ENCODE measurements at regions of chr12 and their contacts with region 1.

Region 1: DNA sequence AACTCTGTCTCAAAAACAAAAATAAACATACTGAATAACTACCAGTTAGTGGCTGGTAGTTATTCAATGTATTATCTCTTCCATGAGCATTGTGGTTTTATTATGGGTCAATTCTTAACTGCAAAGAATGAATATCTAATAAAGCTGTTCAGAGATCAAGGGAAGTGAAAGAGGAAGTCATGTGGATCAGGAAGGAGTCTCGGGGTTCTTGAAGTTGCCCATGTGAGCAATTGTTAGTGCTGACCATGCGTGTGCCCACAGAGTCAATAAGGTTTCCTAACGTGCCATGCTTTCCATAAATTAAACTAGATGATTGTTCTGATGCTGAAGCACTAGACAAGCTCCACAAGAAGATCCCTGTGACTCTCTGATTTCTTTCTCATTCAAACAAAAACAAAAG is 136.5 kb upstream of the CPSF6 start:
- DNase-seq: no peak
- ATAC-seq: no peak
- H3K4me3 ChIP-seq: no peak overlapping the region
- H3K27ac ChIP-seq: peak overlapping the region; percentile 15; the same call in 1 of the 2 replicates
- H3K4me1 ChIP-seq: no peaks in the 10 kb centered on the region; the same call in none of the 2 replicates
- H3K27me3 ChIP-seq: no peaks in the 10 kb centered on the region
- CTCF ChIP-seq: no peak

Region 2: GRCh38 chr12:69024413-69024812 is 78.4 kb before region 1 on chr12:
- CTCF ChIA-PET with region 1: no interaction called
- POLR2A ChIA-PET with region 1: no interaction called
- in situ Hi-C with region 1: no loop called
- intact Hi-C with region 1: no loop called
- DNase-seq: no peak
- ATAC-seq: no peak
- H3K4me3 ChIP-seq: no peak overlapping the region
- H3K27ac ChIP-seq: no peak overlapping the region
- H3K4me1 ChIP-seq: no peaks in the 10 kb centered on the region
- H3K27me3 ChIP-seq: no peaks in the 10 kb centered on the region
- CTCF ChIP-seq: no peak

Region 3: GRCh38 chr12:69168828-69169227 is 66.0 kb after region 1 on chr12:
- CTCF ChIA-PET with region 1: no interaction called
- POLR2A ChIA-PET with region 1: interaction called, 13 read pairs
- in situ Hi-C with region 1: no loop called
- intact Hi-C with region 1: no loop called
- DNase-seq: no peak
- ATAC-seq: no peak
- H3K4me3 ChIP-seq: no peak overlapping the region
- H3K27ac ChIP-seq: no peak overlapping the region
- H3K4me1 ChIP-seq: no peaks in the 10 kb centered on the region
- H3K27me3 ChIP-seq: no peaks in the 10 kb centered on the region
- CTCF ChIP-seq: no peak

Measured in Panc1 (cell line).